Lower lobe of right lung (tissue), 2 donors: ENCODE measurements at regions of chr18 and their contacts with region 1.

Region 1: DNA sequence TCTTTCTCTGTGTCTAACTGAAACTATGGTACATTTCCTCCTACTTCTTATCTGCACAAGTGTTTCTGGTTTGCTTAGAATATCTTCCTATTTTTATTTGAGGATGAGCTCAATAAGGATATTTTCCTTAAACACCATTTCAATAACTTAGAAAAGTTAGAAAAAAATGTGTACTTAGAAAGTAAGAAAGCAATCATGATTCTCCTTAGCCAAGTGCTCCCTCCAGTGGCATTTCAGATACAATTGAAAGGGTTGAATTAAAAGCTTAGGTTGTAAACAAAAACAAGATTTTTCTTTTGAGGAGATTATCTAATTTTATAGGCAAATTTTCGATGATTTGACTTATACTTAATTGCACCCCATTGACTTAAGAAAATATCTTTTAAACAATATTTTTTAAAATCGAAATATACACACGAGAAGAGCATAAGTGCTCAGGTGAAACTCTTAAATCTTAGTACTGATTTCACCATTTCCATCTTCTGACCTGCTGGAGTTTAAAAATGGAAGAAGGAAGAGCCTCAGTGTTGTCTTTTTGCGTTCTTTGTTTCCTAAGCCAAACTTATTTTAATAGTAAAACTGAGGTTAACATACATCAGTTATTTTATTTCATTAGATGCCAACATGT is 26.9 kb downstream of the C18orf63 start:
- DNase-seq: no peak
- ATAC-seq: no peak
- H3K4me3 ChIP-seq: no peak overlapping the region
- H3K27ac ChIP-seq: no peak overlapping the region
- H3K4me1 ChIP-seq: no peaks in the 10 kb centered on the region
- H3K27me3 ChIP-seq: no peaks in the 10 kb centered on the region
- CTCF ChIP-seq: peak; percentile 76

Region 2: DNA sequence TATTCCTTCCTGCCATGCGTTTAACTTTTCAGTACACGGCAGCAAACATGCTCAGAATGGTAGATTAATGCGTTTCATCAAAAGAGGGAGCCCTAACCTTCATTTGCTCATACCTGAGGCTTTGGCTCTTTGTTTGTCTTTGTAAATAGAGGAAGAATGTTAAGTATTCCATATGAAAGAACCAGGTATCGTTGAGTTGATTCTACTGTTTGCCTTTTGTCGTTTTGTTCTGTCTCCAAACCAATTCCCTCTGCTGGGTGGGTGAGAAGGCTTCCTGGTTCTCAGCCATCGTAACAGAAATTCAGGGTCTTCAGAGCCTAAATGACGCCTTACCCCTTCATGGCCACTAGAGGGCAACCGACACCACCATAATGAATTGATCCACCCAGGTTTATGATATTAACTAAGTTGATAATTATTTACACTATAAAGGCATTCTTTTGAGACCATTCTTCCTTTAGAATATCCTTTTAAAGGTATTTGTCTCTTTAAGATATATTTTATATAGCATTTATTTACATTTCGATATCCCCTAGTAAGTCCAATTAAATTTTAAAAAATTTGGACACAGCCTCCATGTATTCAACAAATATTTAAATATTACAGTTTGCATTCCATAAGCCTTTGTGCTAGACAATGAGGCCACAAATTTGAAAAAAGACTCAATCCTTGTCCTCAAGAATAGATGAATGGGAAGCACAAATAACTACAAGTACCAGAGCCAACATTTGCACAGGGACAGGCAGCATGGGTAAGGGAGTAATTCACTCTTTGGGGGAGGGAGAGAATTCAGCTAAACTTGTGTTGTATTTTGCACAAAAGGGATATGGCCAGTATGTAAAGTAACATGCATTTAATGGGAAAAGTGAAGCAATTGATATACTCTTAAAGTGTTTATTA is 146.1 kb before region 1 on chr18:
- intact Hi-C with region 1: loop called (anchors 5 kb)
- DNase-seq: no peak
- ATAC-seq: peak; percentile 82 to 85
- H3K4me3 ChIP-seq: peak overlapping the region; percentile 24
- H3K27ac ChIP-seq: peak overlapping the region; percentile 34
- H3K4me1 ChIP-seq: peaks cover 4% of the 10 kb centered on the region
- H3K27me3 ChIP-seq: no peaks in the 10 kb centered on the region
- CTCF ChIP-seq: peak; percentile 93

Region 3: DNA sequence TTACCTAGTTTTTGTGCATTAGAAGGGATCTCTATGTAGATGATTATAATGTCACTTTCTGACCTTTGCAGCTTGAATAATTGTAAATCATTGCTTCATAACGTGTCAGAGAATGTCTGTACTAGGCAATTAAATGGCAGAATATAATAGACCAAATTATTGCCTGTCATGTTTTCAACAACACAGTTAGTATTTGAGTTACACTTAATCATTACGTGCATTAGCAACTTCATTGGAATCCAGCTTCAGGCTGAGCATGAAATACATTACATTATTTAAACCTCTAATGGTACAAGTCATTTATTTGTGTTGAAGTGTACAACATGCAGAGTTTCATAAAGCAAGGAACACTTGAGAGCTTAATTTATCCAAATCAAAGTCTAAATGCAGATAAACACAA is 303.1 kb after region 1 on chr18:
- intact Hi-C with region 1: no loop called
- DNase-seq: no peak
- ATAC-seq: no peak
- H3K4me3 ChIP-seq: no peak overlapping the region
- H3K27ac ChIP-seq: no peak overlapping the region
- H3K4me1 ChIP-seq: no peaks in the 10 kb centered on the region
- H3K27me3 ChIP-seq: no peaks in the 10 kb centered on the region
- CTCF ChIP-seq: no peak